ENCODE measurements at regions of chr15 and their contacts with region 1.

Region 1: DNA sequence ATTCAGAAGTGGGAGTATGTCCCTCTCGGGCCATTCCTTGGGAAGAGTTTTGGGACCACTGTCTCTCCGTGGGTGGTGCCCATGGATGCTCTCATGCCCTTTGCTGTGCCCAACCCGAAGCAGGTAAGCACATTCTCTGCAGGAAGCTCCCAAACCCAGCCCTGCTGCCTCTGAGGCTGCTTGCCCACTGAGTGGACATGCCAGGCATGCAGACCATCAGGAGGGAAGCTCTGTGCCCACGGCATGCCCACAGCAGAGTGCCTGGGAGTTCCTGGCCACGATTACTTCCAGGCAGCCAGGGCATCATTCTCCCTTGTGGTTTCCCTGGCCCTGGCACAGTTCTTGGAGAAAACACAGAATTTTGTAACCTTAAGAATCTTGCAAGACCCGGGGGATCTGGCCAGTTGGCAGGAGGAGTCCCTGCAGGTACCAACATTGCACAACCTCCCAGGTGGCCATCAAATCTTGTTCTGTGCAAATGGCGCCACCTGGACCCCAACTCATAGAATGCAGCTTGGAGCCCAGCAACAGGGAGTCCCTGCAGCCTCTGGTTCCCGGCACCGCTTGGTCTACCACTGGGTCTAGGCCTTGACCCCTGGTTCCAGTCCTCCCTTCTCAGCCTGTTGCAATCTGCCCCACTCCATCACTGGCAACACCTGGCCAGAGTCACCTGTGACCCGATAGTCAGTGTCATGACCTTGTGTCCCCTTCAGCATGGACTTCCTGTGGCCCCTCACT is 20.4 kb downstream of the FAH start:
- DNase-seq: peak; percentile 72
- H3K4me3 ChIP-seq: no peak overlapping the region
- H3K27ac ChIP-seq: no peak overlapping the region
- H3K4me1 ChIP-seq: no peaks in the 10 kb centered on the region
- H3K27me3 ChIP-seq: no peaks in the 10 kb centered on the region
- CTCF ChIP-seq: peak; percentile 67

Region 2: GRCh38 chr15:79896637-79897379 is 276.4 kb before region 1 on chr15 and contains the start of gene MTHFS:
- intact Hi-C with region 1: loop called (anchors 10 kb)
- DNase-seq: peak; percentile 84
- H3K4me3 ChIP-seq: peak within 1 kb of the TSS; percentile 86
- H3K27ac ChIP-seq: peak within 1 kb of the TSS; percentile 95
- H3K4me1 ChIP-seq: peaks cover 6% of the 10 kb centered on the region
- H3K27me3 ChIP-seq: no peaks in the 10 kb centered on the region
- CTCF ChIP-seq: peak; percentile 34
- total RNA-seq, gene MTHFS: 24.6 to 25.9 TPM

Region 3: GRCh38 chr15:80068578-80068977 is 104.6 kb before region 1 on chr15:
- intact Hi-C with region 1: no loop called
- DNase-seq: no peak
- H3K4me3 ChIP-seq: no peak overlapping the region
- H3K27ac ChIP-seq: no peak overlapping the region
- H3K4me1 ChIP-seq: no peaks in the 10 kb centered on the region
- H3K27me3 ChIP-seq: no peaks in the 10 kb centered on the region
- CTCF ChIP-seq: no peak